ENCODE measurements at regions of chr6 and their contacts with region 1.

Region 1: GRCh38 chr6:106223300-106223930 is 102.1 kb downstream of the ATG5 start:
- DNase-seq: peak; percentile 87
- ATAC-seq: peak; percentile 87
- H3K4me3 Mint-ChIP-seq: no peak overlapping the region
- H3K27ac Mint-ChIP-seq: no peak overlapping the region
- H3K4me1 Mint-ChIP-seq: peaks cover 26% of the 10 kb centered on the region
- H3K27me3 Mint-ChIP-seq: no peaks in the 10 kb centered on the region

Region 2: GRCh38 chr6:105431226-105431625 is 792.2 kb before region 1 on chr6:
- CTCF ChIA-PET with region 1: interaction called, 37 read pairs
- POLR2A ChIA-PET with region 1: no interaction called
- DNase-seq: peak; percentile 51
- ATAC-seq: no peak
- H3K4me3 Mint-ChIP-seq: no peak overlapping the region
- H3K27ac Mint-ChIP-seq: no peak overlapping the region
- H3K4me1 Mint-ChIP-seq: no peaks in the 10 kb centered on the region
- H3K27me3 Mint-ChIP-seq: peaks cover 12% of the 10 kb centered on the region

Region 3: DNA sequence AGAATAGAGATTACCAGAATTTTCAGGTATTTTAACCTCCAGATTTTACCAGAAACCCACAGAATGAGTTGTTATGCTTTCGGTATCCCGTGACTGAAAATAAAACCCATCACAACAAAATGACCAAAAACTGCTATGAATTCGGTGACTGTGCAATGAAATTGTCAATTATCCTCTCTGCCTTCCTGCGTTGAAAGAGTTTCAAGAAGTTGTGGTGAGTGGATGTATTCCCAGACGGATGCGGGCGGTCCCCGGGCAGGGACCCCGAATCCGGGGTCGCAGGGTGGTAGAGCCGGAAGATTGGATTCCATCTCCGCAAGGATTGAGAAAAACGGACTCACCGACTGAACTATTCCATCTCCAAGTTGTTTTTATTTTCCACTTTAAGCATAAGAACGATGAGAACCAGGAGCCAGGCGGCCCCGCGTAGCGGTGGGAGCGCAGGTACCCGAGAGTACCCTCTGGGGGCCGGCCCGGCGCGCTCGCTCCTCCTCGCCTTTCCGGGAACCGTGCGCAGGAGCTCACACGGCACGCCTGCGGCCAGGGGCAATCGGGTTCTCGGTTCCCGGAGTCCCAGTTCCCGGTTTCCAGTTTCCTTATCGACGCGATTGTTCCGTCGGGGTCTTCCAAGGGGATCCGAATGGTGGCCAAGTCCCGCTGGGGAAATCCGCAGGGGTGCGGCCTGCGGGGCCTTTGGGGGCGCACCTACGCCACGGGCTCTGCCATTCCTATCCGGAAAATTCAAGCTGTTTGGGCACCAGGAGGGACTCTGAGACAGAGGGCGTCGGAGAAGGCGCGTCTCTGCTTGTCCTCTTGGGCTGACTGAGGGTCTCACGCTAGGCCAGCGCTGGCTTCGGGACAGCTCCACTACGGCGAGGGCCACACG is 242.2 kb before region 1 on chr6:
- CTCF ChIA-PET with region 1: interaction called, 12 read pairs
- POLR2A ChIA-PET with region 1: interaction called, 3 read pairs
- DNase-seq: peak; percentile 53
- ATAC-seq: peak; percentile 79
- H3K4me3 Mint-ChIP-seq: peak overlapping the region; percentile 84
- H3K27ac Mint-ChIP-seq: peak overlapping the region; percentile 92
- H3K4me1 Mint-ChIP-seq: peaks cover 70% of the 10 kb centered on the region
- H3K27me3 Mint-ChIP-seq: peaks cover 24% of the 10 kb centered on the region

Region 4: DNA sequence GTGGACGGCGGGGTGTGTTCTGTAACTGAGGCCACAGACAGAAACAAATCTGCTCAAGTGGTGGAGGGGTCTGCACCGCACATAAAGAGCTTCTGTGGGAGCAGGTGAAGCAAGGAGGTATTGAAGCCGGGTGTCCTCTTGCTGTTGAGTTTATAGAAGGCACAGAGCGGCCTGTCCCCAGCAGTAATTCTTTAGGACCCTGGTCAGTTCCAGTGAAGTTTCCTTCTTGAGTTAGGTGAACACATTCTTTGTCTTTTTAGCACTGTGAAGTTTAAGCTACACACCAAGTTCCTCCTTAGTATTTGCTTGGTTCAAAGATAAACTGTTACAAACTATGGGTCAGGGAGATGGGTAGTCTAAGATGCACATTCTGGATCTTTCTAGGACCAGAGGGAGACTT is 131.1 kb before region 1 on chr6:
- CTCF ChIA-PET with region 1: interaction called, 80 read pairs
- POLR2A ChIA-PET with region 1: interaction called, 4 read pairs
- DNase-seq: no peak
- ATAC-seq: no peak
- H3K4me3 Mint-ChIP-seq: no peak overlapping the region
- H3K27ac Mint-ChIP-seq: no peak overlapping the region
- H3K4me1 Mint-ChIP-seq: peaks cover 72% of the 10 kb centered on the region
- H3K27me3 Mint-ChIP-seq: peaks cover 24% of the 10 kb centered on the region

Region 5: DNA sequence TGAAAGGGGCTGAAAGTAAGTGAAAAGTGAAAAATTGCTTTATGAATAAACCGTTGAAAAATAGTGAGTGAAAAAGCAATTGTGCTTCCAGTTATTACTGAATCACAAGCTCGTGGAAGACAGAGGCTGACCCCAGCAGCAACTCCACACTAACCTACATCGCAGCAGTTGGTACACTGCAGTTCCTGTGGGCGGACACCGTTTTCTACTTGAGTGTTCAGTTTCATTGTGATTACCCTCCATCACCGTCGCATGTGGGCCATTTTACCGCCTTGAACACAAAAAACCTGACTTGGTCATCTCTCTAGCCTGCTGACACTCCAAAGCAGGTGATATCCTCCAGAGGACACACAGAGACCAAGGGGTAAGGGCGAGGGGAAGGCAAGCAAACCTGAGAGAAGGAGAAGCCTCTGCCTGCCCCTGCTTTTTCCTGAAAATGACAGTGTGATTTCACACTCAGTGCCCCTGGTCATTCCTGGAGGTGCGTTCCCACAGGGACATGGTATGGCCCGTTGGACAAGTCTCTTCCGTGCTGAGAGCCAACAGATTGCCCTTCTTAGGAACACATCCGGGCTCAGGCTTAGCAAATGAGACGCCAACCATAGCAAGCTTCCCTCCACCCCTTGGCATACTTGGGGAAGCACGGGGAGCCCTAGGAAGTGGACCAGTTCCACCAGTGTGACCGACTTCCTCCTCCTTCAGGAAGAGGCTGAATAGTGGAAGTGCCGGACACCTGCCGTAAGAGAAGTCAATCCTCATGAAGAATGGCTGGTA is 108.7 kb before region 1 on chr6:
- CTCF ChIA-PET with region 1: interaction called, 35 read pairs
- POLR2A ChIA-PET with region 1: no interaction called
- DNase-seq: peak; percentile 64
- ATAC-seq: no peak
- H3K4me3 Mint-ChIP-seq: peak overlapping the region; percentile 48
- H3K27ac Mint-ChIP-seq: peak overlapping the region; percentile 83
- H3K4me1 Mint-ChIP-seq: peaks cover 87% of the 10 kb centered on the region
- H3K27me3 Mint-ChIP-seq: peaks cover 2% of the 10 kb centered on the region

Region 6: DNA sequence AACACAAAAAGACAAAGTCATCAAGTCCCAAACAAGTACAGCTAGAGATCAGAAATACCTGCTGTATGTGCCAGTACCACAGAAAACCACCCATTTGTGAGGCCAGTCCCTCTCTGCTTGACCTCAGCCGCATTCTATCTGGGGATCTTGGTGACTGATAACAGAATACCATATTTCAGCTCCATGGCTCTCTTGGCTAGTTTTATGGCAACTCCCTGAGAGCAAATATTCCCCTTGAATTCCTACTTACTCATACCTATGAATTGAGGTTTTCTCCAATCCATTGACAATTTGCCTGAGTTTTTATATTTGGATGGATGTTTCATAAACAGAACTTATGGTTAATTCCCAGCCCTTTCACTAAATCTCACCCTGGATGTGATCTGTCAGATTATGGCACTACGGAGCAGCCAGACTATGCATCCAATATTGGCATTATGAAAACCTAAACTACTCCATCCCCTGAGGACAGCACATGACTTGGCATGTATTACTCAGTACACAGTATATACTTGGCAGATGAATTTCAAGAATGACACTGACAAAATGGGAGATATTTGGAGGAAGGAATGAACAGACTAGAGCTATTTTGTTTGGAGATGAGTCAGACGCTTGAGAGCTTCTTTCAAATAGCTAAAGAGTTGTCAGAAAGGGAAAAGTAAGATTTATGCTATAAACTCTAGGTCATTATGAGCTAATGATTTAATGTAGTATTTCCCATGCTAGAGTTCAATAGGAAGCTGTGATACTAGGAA is 41.6 kb before region 1 on chr6:
- CTCF ChIA-PET with region 1: interaction called, 16 read pairs
- POLR2A ChIA-PET with region 1: no interaction called
- DNase-seq: no peak
- ATAC-seq: no peak
- H3K4me3 Mint-ChIP-seq: no peak overlapping the region
- H3K27ac Mint-ChIP-seq: no peak overlapping the region
- H3K4me1 Mint-ChIP-seq: peaks cover 48% of the 10 kb centered on the region
- H3K27me3 Mint-ChIP-seq: no peaks in the 10 kb centered on the region

Measured in activated CD8-positive, alpha-beta T cell treated with anti-CD3 and anti-CD28 coated beads, Interleukin-2, amount 10 ng/mL, durations not matched to agents 7 days and 5 days (primary cell).